Heart right ventricle (tissue), 16 donors: ENCODE measurements at regions of chr1 and their contacts with region 1.

Region 1: DNA sequence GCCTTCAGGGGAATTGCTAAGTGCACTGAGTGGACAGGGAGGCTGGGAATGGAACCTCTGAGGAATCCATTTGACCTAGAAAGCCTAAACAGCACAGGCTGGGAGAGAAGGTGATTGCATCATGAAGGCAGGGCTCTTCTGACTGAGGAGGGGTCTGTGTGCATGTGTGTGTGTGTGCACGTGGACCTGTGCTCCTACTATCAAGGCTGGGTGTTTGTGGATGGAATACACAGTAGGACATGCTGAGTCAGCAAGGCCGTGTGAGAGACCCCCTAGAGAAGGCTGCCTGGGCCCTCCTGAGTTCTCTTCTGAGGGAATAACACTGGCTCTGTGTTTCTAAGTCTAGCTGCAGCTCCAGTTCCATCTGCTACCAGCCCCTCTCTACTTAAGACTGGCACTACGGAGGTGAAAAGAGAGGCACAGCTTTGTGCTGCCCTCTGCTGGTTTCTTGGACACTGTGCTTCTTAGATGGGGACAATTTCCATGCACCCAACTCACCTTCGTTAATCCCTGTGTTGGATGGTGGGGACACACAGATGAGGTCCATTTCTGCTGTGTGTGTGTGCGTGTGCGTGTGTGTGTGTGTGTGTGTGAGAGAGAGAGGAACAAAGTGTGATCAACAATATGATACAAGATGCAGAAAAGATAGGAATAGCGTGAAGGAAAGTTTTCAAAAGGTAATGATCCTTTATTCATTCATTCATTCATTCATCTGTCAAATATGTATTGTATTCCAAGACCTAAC is 6.2 kb upstream of the EFCAB14 start:
- DNase-seq: peak; percentile 22 to 73
- ATAC-seq: peak; percentile 85 to 94 (median 92)
- H3K4me3 ChIP-seq: no peak overlapping the region
- H3K27ac ChIP-seq: peak overlapping the region in 6 of 10 donors; percentile 19 to 77 (median 42)
- H3K4me1 ChIP-seq: peaks cover 0 to 24% (median 9%) of the 10 kb centered on the region in 9 donors
- H3K27me3 ChIP-seq: peaks cover 0 to 36% (median 17%) of the 10 kb centered on the region in 7 donors
- CTCF ChIP-seq: peak; percentile 58 to 86 (median 83)

Region 2: GRCh38 chr1:46406881-46407608 is 318.1 kb before region 1 on chr1:
- intact Hi-C with region 1: loop called in 1 of 10 experiments (anchors 5 kb)
- DNase-seq: no peak
- ATAC-seq: no peak
- H3K4me3 ChIP-seq: peak overlapping the region in 8 of 10 donors; percentile 5 to 38 (median 26)
- H3K27ac ChIP-seq: no peak overlapping the region
- H3K4me1 ChIP-seq: peaks cover 0 to 20% (median 7%) of the 10 kb centered on the region in 9 donors
- H3K27me3 ChIP-seq: no peaks in the 10 kb centered on the region
- CTCF ChIP-seq: no peak

Region 3: DNA sequence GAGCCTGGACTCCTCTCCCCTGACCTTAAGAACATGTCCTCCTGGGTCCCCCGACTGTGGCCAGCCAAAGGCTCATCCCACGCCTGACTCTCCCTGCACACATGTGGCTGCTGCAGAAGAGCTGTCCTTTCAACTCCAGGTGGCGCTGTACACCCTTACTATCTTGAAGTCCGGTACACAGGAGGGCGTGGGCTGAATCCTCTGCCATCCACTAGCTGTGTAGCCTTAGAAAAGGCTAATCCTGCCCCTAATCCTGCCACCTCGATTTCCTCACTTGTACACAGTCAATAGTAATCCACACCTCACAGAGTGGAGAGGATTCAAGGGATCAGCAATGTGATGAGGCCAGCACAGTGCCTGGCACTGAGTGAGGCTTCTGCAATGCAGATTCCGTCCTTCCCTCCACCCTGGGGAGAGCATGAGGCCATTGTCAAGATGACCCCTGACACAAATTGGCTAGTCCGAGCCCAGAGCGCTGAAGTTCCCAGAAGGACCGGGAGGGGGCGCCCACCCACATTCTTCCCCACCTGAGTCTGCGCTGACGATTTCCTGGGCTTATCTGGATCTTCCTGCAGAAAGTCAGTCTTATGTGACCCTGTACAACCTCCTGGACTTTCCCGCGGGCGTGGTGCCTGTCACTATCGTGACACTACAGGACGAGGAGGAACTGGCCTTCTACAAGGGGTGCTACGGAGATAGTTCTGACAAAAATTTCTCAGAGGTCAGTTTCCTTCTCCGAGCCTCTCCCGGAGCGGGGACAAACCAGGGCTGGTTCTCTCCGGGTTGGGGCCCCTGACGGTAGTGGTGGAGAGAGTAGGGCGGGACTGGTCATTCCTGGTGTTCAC is 282.6 kb before region 1 on chr1:
- intact Hi-C with region 1: loop called in 5 of 10 experiments (anchors 2 to 10 kb)
- DNase-seq: peak; percentile 72 to 73
- ATAC-seq: peak; percentile 54 to 83 (median 79)
- H3K4me3 ChIP-seq: peak overlapping the region in 9 of 10 donors; percentile 25 to 51 (median 47)
- H3K27ac ChIP-seq: peak overlapping the region in 1 of 10 donors; percentile 50
- H3K4me1 ChIP-seq: peaks cover 0 to 14% (median 3%) of the 10 kb centered on the region in 9 donors
- H3K27me3 ChIP-seq: peaks cover 0 to 28% (median 14%) of the 10 kb centered on the region in 7 donors
- CTCF ChIP-seq: peak; percentile 72 to 93 (median 88)

Region 4: DNA sequence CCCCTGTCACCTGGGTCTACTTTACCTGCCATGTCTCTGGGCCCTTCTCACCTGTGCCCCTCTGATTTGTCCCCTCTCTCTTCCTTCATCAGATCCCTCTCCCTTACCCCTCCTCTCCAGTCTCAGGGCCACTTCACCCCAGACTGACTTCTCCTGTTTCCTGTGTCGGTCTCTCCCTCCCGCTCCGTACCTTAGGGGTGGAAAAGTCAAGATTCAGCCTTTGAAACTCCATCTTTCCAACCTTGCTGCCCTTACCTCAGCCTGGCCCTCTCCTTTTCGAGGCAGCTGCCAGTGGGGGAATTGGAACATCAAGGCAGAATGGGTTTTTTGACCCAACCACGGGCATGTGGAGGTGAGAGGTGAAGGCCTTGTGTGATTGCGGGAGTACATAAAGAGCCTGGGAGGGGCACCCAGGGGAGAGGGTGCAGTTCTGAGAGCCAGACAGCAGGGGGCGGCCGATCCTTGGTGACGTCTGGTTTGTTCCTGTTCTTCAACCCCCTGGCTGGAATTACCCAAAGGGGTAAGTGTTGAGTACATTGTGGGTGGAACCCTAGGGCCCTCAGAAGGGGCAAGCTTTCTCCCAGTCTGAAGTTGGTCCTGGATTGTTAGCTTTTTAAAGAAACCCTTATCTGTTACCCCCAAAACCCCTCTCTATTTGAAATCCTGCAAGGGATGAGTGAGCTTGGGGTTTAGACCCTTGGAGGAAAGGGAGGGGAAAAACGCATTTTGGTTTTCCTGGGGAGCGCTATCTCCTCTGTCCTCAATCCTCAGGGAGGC is 247.8 kb before region 1 on chr1:
- intact Hi-C with region 1: loop called in 1 of 10 experiments (anchors 10 kb)
- DNase-seq: peak; percentile 51 to 64
- ATAC-seq: peak; percentile 57 to 78 (median 72)
- H3K4me3 ChIP-seq: no peak overlapping the region
- H3K27ac ChIP-seq: no peak overlapping the region
- H3K4me1 ChIP-seq: no peaks in the 10 kb centered on the region
- H3K27me3 ChIP-seq: peaks cover 0 to 86% (median 80%) of the 10 kb centered on the region in 7 donors
- CTCF ChIP-seq: peak; percentile 77 to 93 (median 87)

Region 5: GRCh38 chr1:46527474-46528296 is 197.5 kb before region 1 on chr1:
- intact Hi-C with region 1: loop called in 9 of 10 experiments (anchors 2 to 10 kb)
- DNase-seq: peak; percentile 80
- ATAC-seq: peak; percentile 73 to 91 (median 84)
- H3K4me3 ChIP-seq: no peak overlapping the region
- H3K27ac ChIP-seq: no peak overlapping the region
- H3K4me1 ChIP-seq: peaks cover 0 to 12% (median 2%) of the 10 kb centered on the region in 9 donors
- H3K27me3 ChIP-seq: peaks cover 0 to 82% (median 70%) of the 10 kb centered on the region in 7 donors
- CTCF ChIP-seq: peak; percentile 81 to 96 (median 91)

Region 6: GRCh38 chr1:46622344-46622743 is 102.8 kb before region 1 on chr1:
- intact Hi-C with region 1: loop called in 8 of 10 experiments (anchors 1 to 10 kb)
- DNase-seq: no peak
- ATAC-seq: peak in 6 of 8 donors; percentile 29 to 59 (median 38)
- H3K4me3 ChIP-seq: no peak overlapping the region
- H3K27ac ChIP-seq: no peak overlapping the region
- H3K4me1 ChIP-seq: peaks cover 0 to 24% (median 15%) of the 10 kb centered on the region in 9 donors
- H3K27me3 ChIP-seq: no peaks in the 10 kb centered on the region
- CTCF ChIP-seq: peak in 8 of 9 donors; percentile 7 to 57 (median 50)